WTC11 (cell line): ENCODE measurements at regions of chr3 and their contacts with region 1.

Region 1: DNA sequence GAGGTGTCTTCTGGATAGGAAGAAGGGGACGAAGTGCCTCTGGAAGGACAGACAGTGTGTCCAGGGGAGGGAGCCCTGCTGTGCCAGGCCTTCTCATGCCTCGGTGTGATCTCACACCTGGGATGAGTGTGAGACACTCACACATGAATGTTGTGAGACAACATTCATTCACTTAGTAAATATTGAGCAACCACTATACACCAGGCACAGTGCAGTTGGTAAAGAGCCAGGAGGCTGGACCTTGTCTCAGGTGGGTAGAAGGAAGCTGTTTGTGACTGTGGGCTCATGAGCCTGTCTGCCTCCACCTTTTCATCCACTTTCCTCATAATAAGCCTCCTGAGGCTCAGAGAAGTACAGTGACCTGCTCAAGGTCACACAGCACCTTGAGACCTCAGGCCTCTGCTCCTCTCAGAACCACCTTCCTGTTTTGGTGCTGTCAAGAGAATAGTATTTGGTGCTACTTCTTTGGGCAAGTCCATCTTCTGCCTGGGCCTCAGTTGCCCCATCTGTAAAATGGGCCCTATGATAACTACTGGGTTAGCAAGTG is 20.9 kb downstream of the SLC6A6 start:
- DNase-seq: no peak
- ATAC-seq: no peak
- H3K4me3 Mint-ChIP-seq: peak overlapping the region; percentile 16
- H3K27ac Mint-ChIP-seq: peak overlapping the region; percentile 87
- H3K4me1 Mint-ChIP-seq: peaks cover 89% of the 10 kb centered on the region
- H3K27me3 Mint-ChIP-seq: no peaks in the 10 kb centered on the region
- CTCF ChIP-seq: no peak

Region 2: GRCh38 chr3:14467814-14468620 is 44.7 kb after region 1 on chr3:
- CTCF ChIA-PET with region 1: interaction called, 10 read pairs
- POLR2A ChIA-PET with region 1: no interaction called
- DNase-seq: peak; percentile 55
- ATAC-seq: peak; percentile 65
- H3K4me3 Mint-ChIP-seq: no peak overlapping the region
- H3K27ac Mint-ChIP-seq: peak overlapping the region; percentile 68; the same call in 1 of the 2 replicates
- H3K4me1 Mint-ChIP-seq: peaks cover 16% of the 10 kb centered on the region
- H3K27me3 Mint-ChIP-seq: no peaks in the 10 kb centered on the region
- CTCF ChIP-seq: peak; percentile 94